GM23248 (cell line): ENCODE measurements at regions of chr2 and their contacts with region 1.

Region 1: DNA sequence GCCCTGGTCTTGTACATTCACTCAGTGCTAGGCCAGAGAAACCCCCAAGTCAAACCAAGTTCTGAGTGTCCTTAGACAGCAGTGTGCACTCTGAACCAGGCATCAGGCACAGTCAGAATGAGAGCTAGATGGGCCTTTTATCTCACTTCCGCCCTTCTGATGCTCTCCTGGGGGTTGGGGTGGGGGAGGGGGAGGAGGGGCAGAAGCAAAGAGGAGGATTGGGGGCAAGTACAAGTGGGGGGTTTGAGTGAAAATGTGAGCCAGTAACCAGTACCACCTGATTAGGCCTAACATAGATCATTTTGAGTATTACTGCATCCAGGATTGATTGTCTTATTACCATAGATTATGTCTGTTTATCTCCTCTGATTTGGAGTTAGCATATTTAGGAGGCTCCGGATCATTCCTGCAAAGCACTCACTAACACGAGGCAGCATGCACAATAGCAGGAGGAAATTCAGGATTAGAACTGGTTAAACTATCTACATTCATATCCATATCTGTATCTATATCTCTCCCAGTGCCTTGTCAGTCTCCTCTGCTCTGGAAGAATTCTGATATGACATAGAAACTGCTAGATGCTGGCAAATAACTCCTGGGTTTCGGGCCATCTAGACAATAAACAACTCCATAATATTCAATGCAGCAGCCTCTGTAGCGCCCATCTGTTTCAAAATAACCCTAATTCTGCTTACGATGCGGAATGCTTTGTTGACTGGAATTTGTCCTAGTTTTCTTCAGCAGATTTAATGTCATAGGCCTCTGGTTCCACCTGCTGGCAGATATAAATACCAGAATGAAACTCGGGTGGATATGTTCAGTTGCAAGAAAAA is 149.1 kb downstream of the RHBDD1 start:
- DNase-seq: peak; percentile 89
- H3K4me3 ChIP-seq: no peak overlapping the region
- H3K27ac ChIP-seq: no peak overlapping the region
- H3K4me1 ChIP-seq: peaks cover 4% of the 10 kb centered on the region
- H3K27me3 ChIP-seq: no peaks in the 10 kb centered on the region

Region 2: DNA sequence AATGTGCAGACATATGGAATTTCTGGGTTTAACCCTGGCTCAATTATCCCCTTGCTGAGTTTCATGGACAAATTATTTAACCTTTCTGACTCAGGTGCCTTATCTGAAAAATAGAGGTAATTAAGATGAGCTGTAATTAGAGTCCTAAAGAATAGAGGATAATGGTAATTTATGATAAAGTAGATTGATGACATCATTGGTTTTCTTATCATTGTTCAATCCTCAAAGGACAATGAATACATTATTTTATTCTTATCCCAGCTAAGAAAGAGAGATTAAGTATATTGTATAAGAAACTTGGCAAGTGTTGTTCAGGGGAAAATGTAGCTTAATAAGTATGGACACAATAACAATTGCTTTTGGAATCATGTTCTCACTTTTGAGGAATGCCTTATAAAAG is 1306.2 kb before region 1 on chr2:
- in situ Hi-C with region 1: loop called (anchors 5 kb)
- DNase-seq: no peak
- H3K4me3 ChIP-seq: no peak overlapping the region
- H3K27ac ChIP-seq: no peak overlapping the region
- H3K4me1 ChIP-seq: no peaks in the 10 kb centered on the region
- H3K27me3 ChIP-seq: no peaks in the 10 kb centered on the region

Region 3: GRCh38 chr2:225889446-225889850 is 1095.5 kb before region 1 on chr2:
- in situ Hi-C with region 1: loop called (anchors 25 kb)
- DNase-seq: peak; percentile 86
- H3K4me3 ChIP-seq: no peak overlapping the region
- H3K27ac ChIP-seq: peak overlapping the region; percentile 29
- H3K4me1 ChIP-seq: peaks cover 15% of the 10 kb centered on the region
- H3K27me3 ChIP-seq: no peaks in the 10 kb centered on the region